Left cardiac atrium (tissue), 4 donors: ENCODE measurements at regions of chr16 and their contacts with region 1.

Region 1: DNA sequence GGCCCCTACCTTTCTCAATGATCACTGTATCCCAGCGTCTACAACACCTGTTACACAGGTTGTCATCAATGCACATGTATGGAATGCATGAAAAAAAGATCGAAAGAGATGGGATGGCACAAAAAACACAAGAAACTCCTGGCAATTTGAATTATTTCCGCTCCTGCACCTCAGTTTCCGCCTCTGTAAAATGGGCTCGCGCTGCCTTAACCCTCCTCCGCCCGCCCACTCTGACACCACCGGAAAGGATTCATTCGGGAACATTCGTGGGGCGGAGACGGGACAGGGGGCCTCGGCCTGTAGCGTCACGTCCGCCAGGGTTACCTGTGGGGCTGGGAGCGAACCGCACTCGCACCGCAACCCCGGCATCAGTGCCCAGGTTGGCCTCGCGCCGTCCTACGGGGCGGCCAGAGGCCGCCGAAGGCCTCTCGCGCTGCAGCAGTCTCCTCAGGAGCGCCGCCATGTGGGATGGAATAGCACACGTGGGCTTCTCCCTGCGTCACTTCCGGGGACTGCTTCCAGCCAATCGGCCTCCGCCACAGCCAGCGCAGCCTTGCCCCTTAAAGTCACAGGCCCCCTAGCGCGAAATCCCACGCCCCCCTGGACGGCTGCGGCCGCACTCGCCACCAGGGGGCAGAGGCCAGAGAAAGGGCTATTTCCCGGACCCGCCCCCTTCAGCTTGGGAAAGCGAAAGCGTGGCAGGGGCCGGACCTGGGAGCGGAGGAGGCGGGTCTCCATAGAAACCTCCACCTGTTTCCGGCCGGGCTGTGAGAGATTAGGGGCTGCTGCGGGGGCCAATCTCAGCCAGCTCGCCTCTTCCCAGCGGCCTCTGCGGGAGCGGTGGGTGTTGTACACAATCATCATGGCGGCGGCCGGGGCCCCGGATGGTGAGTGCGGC is at the starts of genes EARS2 and UBFD1:
- DNase-seq: peak; percentile 98
- ATAC-seq: peak; percentile 96 to 97
- total RNA-seq, gene EARS2: 16.6 to 19.3 TPM
- total RNA-seq, gene UBFD1: 50.7 to 62.3 TPM

Region 2: DNA sequence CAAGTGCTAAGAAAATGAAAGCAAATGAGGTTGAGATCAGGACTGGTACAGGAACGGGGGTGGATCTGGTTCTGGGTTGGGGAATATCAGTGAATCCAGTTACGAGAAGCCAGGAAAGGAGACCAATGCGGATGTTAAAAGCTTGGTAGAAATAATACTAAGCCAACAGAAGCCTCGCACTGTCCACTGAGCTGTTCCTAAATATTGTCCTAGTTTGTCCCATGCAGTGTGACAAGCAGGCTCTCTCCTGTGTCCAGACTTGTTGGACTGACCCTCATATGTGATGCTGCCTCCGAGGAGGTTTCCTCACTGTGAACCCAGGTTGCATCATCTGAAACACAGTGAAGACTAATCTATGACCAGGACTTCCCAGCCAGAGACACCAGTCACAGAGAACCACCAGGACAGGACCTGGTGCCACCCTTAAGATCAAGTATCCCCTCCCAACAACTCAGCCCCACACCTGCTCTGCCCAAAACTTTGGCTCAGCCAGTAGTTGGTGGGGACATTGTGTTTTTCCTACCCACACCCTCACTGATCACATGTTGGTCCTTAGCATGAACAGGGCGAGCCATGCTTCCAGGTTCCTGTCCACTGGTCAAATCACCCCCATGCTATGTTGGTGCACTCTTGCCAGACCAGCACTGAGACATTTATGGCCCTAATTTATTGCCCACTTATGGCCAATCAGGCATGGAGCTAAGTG is 287.7 kb before region 1 on chr16:
- intact Hi-C with region 1: no loop called
- DNase-seq: no peak
- ATAC-seq: no peak

Region 3: DNA sequence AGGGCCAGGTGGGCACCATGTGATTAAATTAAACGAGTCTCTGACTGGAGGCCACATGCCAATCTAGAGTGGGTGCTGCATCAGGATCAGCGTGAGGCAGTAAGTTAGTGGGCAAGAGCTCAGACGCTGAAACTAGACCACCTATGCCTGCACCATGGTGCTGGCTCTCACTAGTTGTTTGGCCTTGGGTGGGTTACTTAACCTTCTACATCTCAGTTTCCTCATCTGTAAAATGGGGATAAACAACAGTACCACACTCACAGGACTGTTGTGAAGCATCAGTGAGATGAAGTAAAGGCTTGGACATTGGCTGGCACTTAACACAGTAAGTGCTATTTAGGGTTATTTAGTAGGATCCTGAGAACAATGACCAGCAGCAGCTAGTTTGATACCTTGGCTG is 33.1 kb after region 1 on chr16:
- intact Hi-C with region 1: loop called (anchors 2 to 5 kb)
- DNase-seq: no peak
- ATAC-seq: no peak

Region 4: GRCh38 chr16:23595951-23596720 is 39.0 kb after region 1 on chr16 and contains the start of gene NDUFAB1:
- intact Hi-C with region 1: loop called (anchors 1 to 5 kb)
- DNase-seq: peak; percentile 93
- ATAC-seq: peak; percentile 98 to 99
- total RNA-seq, gene NDUFAB1: 445 TPM